Right ventricle myocardium inferior (tissue), 1 donor: ENCODE measurements at regions of chr17 and their contacts with region 1.

Region 1: GRCh38 chr17:4534026-4534914 is 20.9 kb downstream of the MYBBP1A start:
- DNase-seq: no peak
- ATAC-seq: no peak

Region 2: GRCh38 chr17:4476511-4477070 is 57.7 kb before region 1 on chr17:
- intact Hi-C with region 1: loop called (anchors 10 kb)
- DNase-seq: no peak
- ATAC-seq: no peak

Region 3: GRCh38 chr17:4499431-4500187 is 34.7 kb before region 1 on chr17:
- intact Hi-C with region 1: loop called (anchors 2 kb)
- DNase-seq: no peak
- ATAC-seq: no peak

Region 4: DNA sequence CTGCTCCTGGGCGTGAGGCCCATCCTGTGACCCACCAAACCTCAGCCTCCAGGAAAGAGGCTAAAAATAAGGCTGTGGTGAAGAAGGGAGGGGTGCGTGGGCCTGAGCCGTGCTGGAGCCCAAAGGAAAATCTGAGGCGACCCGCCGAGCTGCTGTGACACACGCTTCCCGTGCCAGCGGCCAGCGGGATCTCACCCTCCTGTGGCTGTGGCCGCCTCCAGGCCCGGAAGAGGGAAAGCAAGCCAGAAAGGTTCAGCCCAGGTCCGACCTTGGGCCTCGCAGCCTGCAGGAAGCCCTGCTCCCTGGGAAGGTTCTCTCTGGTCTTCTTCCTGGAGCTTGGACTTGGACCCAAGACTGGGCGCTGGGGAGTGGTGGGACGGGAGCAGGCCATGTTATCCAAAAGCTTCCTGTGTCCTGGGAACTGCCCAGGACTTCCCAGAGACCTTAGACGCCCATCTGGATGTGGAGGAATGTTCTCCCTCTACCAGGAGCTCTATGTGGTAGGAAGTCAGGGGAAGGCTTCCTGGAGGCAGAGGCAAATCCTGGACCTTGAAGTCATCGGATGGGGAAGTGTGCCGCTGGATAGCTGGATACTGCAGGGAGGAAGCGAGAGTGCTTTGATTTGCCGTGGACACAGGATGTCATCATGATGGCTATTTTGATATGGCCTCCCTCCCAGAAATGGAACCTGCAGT is 24.2 kb before region 1 on chr17:
- intact Hi-C with region 1: loop called (anchors 2 kb)
- DNase-seq: peak; percentile 58
- ATAC-seq: no peak

Region 5: GRCh38 chr17:4706121-4706520 is 171.9 kb after region 1 on chr17:
- intact Hi-C with region 1: no loop called
- DNase-seq: no peak
- ATAC-seq: no peak